ENCODE measurements at regions of chr22 and their contacts with region 1.

Region 1: DNA sequence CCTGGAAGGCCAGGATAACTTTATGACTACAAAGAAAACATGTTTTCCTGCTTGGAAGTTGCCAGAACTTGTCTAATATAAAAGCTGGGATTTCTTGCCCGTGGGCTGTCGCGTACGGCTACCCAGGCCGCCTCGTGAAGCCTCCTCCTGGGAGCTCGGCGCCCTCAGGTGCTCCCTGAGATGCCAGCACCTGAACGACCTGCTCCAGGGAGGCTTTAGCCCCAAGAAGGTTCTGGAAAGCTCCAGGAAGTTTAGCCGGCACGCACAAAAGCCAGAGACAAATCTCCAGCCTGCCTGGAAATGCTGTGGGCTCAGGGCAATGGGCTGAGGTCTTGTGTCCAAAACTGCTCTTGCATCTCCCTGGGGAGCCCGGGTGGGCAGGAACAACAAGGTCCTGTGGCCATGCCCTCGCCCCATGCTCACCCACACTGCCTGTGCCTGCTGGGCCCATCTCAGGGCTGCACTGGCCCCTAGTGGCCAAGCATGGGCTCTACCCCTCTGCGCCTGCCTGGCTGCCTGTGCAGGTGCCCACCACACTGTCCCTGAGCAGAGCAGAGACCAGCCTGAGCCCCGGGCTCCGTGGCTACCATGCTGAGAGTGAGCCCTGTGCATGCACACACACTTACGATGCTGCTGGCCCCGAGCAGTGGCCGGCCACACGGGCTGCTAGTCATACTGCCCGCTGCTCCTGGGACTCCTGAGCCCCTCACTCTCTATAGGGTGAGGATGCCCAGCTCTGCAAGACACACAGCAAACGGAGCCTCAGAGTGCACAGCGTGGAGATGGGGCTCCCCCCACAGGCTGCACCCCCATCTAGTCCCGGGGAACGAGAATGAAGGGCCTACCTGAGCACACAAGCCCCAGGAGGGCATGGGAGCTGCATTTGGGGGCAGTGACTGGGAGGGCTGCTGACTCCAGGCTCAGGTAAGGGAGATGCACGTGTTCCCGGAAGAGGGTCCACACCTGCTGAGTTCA is 4.9 kb upstream of the CELSR1 start:
- DNase-seq: no peak
- H3K4me3 ChIP-seq: no peak overlapping the region
- H3K27ac ChIP-seq: peak overlapping the region; percentile 24 to 65 (median 48)
- H3K4me1 ChIP-seq: peaks cover 32 to 81% (median 52%) of the 10 kb centered on the region in 3 donors
- H3K27me3 ChIP-seq: peaks cover 0 to 29% (median 0%) of the 10 kb centered on the region in 4 donors
- CTCF ChIP-seq: peak; percentile 72 to 97 (median 90)
- POLR2A ChIP-seq: no peak

Region 2: DNA sequence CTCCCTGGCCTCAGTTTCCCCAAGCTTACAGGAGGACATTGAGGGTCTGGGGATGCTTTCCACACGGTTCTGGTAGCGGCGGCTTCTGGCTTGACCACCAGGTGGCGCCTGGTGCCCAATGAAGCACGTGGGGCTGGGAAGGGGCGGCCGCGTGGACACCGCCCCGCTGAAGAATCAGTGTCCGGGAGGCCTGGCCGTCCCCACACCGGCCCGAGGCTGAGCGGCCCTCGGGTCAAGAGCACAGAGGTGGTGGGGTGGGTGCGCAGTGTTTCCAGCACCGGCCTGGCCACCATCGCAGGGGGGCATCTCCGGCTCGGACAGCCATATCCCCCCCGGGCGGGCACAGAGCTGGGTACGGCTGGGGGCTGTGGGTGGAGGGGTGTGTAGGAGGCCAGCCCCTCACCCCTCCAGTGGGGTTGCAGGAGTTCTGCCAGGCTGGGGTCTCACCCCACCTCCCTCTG is 419.8 kb before region 1 on chr22:
- intact Hi-C with region 1: loop called (anchors 10 kb)
- DNase-seq: no peak
- H3K4me3 ChIP-seq: peak overlapping the region in 2 of 4 donors; percentile 4 to 28
- H3K27ac ChIP-seq: no peak overlapping the region
- H3K4me1 ChIP-seq: peaks cover 3 to 43% (median 13%) of the 10 kb centered on the region in 3 donors
- H3K27me3 ChIP-seq: no peaks in the 10 kb centered on the region
- CTCF ChIP-seq: peak; percentile 89 to 95 (median 92)
- POLR2A ChIP-seq: no peak

Region 3: GRCh38 chr22:46367707-46368191 is 174.5 kb before region 1 on chr22:
- intact Hi-C with region 1: loop called (anchors 5 kb)
- DNase-seq: no peak
- H3K4me3 ChIP-seq: peak overlapping the region in 1 of 4 donors; percentile 7
- H3K27ac ChIP-seq: no peak overlapping the region
- H3K4me1 ChIP-seq: peaks cover 0 to 31% (median 0%) of the 10 kb centered on the region in 3 donors
- H3K27me3 ChIP-seq: peaks cover 0 to 35% (median 0%) of the 10 kb centered on the region in 4 donors
- CTCF ChIP-seq: peak; percentile 85 to 96 (median 92)
- POLR2A ChIP-seq: no peak

Region 4: GRCh38 chr22:46457524-46458488 is 84.5 kb before region 1 on chr22:
- intact Hi-C with region 1: loop called (anchors 10 kb)
- DNase-seq: no peak
- H3K4me3 ChIP-seq: no peak overlapping the region
- H3K27ac ChIP-seq: no peak overlapping the region
- H3K4me1 ChIP-seq: peaks cover 8 to 43% (median 17%) of the 10 kb centered on the region in 3 donors
- H3K27me3 ChIP-seq: peaks cover 0 to 5% (median 0%) of the 10 kb centered on the region in 4 donors
- CTCF ChIP-seq: no peak
- POLR2A ChIP-seq: no peak

Region 5: GRCh38 chr22:46661221-46661851 is 119.0 kb after region 1 on chr22:
- intact Hi-C with region 1: no loop called
- DNase-seq: no peak
- H3K4me3 ChIP-seq: no peak overlapping the region
- H3K27ac ChIP-seq: peak overlapping the region; percentile 63 to 83 (median 78)
- H3K4me1 ChIP-seq: peaks cover 21 to 58% (median 34%) of the 10 kb centered on the region in 3 donors
- H3K27me3 ChIP-seq: no peaks in the 10 kb centered on the region
- CTCF ChIP-seq: no peak
- POLR2A ChIP-seq: no peak